ENCODE measurements at regions of chr6 and their contacts with region 1.

Region 1: GRCh38 chr6:33161354-33162331 is 30.6 kb downstream of the COL11A2 start:
- DNase-seq: peak; percentile 61 to 74 (median 73)
- H3K4me3 ChIP-seq: peak overlapping the region; percentile 19 to 78 (median 57)
- H3K27ac ChIP-seq: no peak overlapping the region
- H3K4me1 ChIP-seq: peaks cover 0 to 20% (median 14%) of the 10 kb centered on the region in 4 experiments
- H3K27me3 ChIP-seq: peaks cover 0 to 5% (median 0%) of the 10 kb centered on the region in 5 experiments

Region 2: GRCh38 chr6:33095681-33096080 is 66.0 kb before region 1 on chr6:
- CTCF ChIA-PET with region 1: no interaction called
- POLR2A ChIA-PET with region 1: no interaction called
- DNase-seq: no peak
- H3K4me3 ChIP-seq: no peak overlapping the region
- H3K27ac ChIP-seq: no peak overlapping the region
- H3K4me1 ChIP-seq: no peaks in the 10 kb centered on the region
- H3K27me3 ChIP-seq: no peaks in the 10 kb centered on the region

Region 3: GRCh38 chr6:33126101-33126714 is 35.4 kb before region 1 on chr6:
- CTCF ChIA-PET with region 1: interaction called, 26 read pairs
- POLR2A ChIA-PET with region 1: no interaction called
- DNase-seq: peak; percentile 51 to 78 (median 66)
- H3K4me3 ChIP-seq: no peak overlapping the region
- H3K27ac ChIP-seq: no peak overlapping the region
- H3K4me1 ChIP-seq: no peaks in the 10 kb centered on the region
- H3K27me3 ChIP-seq: no peaks in the 10 kb centered on the region

Region 4: DNA sequence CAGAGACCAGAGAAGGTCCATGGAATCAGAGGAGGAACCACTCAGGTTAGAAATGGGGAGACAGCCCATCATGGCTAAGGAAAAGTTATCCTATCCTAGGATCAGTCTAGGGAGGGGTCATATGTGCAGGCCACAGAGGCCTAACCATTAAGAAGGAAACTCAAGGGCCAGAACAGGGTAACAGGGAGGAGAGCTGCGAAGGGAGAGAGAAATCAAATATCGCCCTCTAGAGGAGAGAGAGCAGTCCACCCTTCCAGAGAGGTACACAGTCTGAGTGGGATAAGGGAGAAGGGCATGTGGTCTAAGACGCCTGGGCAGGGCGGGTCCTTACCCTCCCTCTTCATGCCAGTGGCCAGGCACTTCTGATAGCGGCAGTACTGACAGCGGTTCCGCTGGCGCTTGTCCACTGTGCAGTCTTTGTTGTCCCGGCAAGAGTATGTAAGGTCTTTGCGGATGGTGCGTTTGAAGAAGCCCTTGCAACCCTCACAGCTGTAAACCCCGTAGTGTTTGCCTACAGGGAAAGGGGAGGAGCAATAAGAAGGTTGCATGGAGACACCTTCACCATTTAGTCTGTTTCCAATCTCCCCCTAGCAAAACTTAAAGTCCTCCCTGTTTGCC is 35.9 kb after region 1 on chr6:
- CTCF ChIA-PET with region 1: interaction called, 14 read pairs
- POLR2A ChIA-PET with region 1: no interaction called
- DNase-seq: peak; percentile 69 to 78 (median 77)
- H3K4me3 ChIP-seq: no peak overlapping the region
- H3K27ac ChIP-seq: peak overlapping the region in 1 of 2 experiments; percentile 37
- H3K4me1 ChIP-seq: peaks cover 7 to 45% (median 36%) of the 10 kb centered on the region in 4 experiments
- H3K27me3 ChIP-seq: peaks cover 0 to 5% (median 0%) of the 10 kb centered on the region in 5 experiments